ENCODE measurements at regions of chr12 and their contacts with region 1.

Region 1: GRCh38 chr12:116737774-116738700 is at the starts of genes RNFT2 and SPRING1:
- DNase-seq: peak; percentile 98 to 99 (median 99)
- ATAC-seq: peak; percentile 97
- H3K4me3 ChIP-seq: peak within 1 kb of the TSS; percentile 76 to 82
- H3K4me3 Mint-ChIP-seq: peak within 1 kb of the TSS; percentile 95
- H3K27ac ChIP-seq: peak within 1 kb of the TSS; percentile 55 to 61
- H3K27ac Mint-ChIP-seq: peak within 1 kb of the TSS; percentile 91
- H3K4me1 ChIP-seq: peaks cover 13% of the 10 kb centered on the region
- H3K4me1 Mint-ChIP-seq: peaks cover 39% of the 10 kb centered on the region
- H3K27me3 ChIP-seq: no peaks in the 10 kb centered on the region
- H3K27me3 Mint-ChIP-seq: no peaks in the 10 kb centered on the region
- CTCF ChIP-seq: no peak
- total RNA-seq, gene RNFT2: 3.8 to 4.1 TPM
- total RNA-seq, gene SPRING1: 14.1 to 14.4 TPM

Region 2: DNA sequence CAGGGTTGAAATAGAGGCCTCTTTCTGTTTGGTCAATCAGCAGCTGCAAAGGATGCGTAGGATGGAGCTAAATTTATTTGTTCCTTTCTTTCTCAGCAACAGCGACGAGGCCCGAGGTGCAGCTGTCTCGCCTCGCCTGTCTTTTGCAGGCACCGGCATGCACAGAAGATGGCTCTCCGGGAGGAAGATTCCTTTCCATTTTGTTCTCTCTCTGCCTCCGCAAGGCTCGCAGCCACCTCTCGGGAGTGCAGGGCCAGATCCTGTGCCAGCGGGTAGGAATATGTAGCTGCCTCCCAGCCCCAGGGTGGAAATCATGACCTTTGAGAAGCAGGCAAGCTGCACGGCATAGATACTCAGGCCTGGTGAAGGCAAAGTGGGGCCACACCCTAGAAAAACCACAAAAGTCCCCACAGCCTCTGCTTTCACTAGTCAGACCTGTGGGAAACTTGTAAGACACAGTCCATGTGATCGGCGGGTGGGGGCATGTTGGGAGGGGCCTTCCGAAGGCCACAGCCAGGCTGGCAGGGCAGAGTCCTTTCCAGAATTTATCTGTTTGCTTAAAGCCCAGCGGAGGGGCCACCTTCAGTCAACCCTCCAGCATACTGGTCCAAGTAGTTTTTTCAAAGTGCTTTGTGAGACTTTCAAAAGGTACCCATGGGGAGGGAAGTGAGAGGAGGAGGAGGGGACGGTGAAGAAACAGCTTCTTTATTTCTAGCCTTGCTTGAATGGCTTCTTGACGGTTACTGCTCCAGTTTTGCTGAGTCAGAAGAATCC is 178.7 kb before region 1 on chr12 and contains the start of gene MAP1LC3B2:
- CTCF ChIA-PET with region 1: no interaction called
- POLR2A ChIA-PET with region 1: no interaction called
- intact Hi-C with region 1: loop called in 1 of 2 experiments (anchors 1 kb)
- DNase-seq: peak; percentile 47 to 92 (median 77)
- ATAC-seq: peak; percentile 80
- H3K4me3 ChIP-seq: peak within 1 kb of the TSS; percentile 40 to 47
- H3K4me3 Mint-ChIP-seq: peak within 1 kb of the TSS; percentile 69
- H3K27ac ChIP-seq: peak within 1 kb of the TSS; percentile 53 to 66
- H3K27ac Mint-ChIP-seq: peak within 1 kb of the TSS; percentile 94
- H3K4me1 ChIP-seq: peaks cover 29% of the 10 kb centered on the region
- H3K4me1 Mint-ChIP-seq: peaks cover 48% of the 10 kb centered on the region
- H3K27me3 ChIP-seq: no peaks in the 10 kb centered on the region
- H3K27me3 Mint-ChIP-seq: no peaks in the 10 kb centered on the region
- CTCF ChIP-seq: no peak
- total RNA-seq, gene MAP1LC3B2: 0.97 to 1.3 TPM

Region 3: GRCh38 chr12:116910645-116911451 is 172.8 kb after region 1 on chr12 and contains the start of gene FBXW8:
- CTCF ChIA-PET with region 1: no interaction called
- POLR2A ChIA-PET with region 1: no interaction called
- intact Hi-C with region 1: loop called in 1 of 2 experiments (anchors 5 kb)
- DNase-seq: peak; percentile 17 to 79 (median 64)
- ATAC-seq: peak; percentile 75
- H3K4me3 ChIP-seq: peak within 1 kb of the TSS; percentile 52
- H3K4me3 Mint-ChIP-seq: peak within 1 kb of the TSS; percentile 87
- H3K27ac ChIP-seq: peak within 1 kb of the TSS in 1 of 2 experiments; percentile 43
- H3K27ac Mint-ChIP-seq: peak within 1 kb of the TSS; percentile 76
- H3K4me1 ChIP-seq: peaks cover 9% of the 10 kb centered on the region
- H3K4me1 Mint-ChIP-seq: peaks cover 35% of the 10 kb centered on the region
- H3K27me3 ChIP-seq: no peaks in the 10 kb centered on the region
- H3K27me3 Mint-ChIP-seq: peaks cover 2% of the 10 kb centered on the region
- CTCF ChIP-seq: no peak
- total RNA-seq, gene FBXW8: 5.6 to 6.5 TPM

Region 4: GRCh38 chr12:117190210-117190781 is 452.3 kb after region 1 on chr12 and contains the start of gene FBXO21:
- CTCF ChIA-PET with region 1: no interaction called
- POLR2A ChIA-PET with region 1: no interaction called
- intact Hi-C with region 1: loop called (anchors 1 to 2 kb)
- DNase-seq: peak; percentile 90 to 98 (median 93)
- ATAC-seq: peak; percentile 96
- H3K4me3 ChIP-seq: peak within 1 kb of the TSS; percentile 49 to 87
- H3K4me3 Mint-ChIP-seq: peak within 1 kb of the TSS; percentile 93
- H3K27ac ChIP-seq: peak within 1 kb of the TSS; percentile 69 to 83
- H3K27ac Mint-ChIP-seq: peak within 1 kb of the TSS; percentile 92
- H3K4me1 ChIP-seq: peaks cover 22% of the 10 kb centered on the region
- H3K4me1 Mint-ChIP-seq: peaks cover 31% of the 10 kb centered on the region
- H3K27me3 ChIP-seq: no peaks in the 10 kb centered on the region
- H3K27me3 Mint-ChIP-seq: no peaks in the 10 kb centered on the region
- CTCF ChIP-seq: no peak
- total RNA-seq, gene FBXO21: 77.7 to 87.7 TPM

Measured in CD8-positive, alpha-beta T cell (primary cell).